CD4-positive, alpha-beta T cell (primary cell): ENCODE measurements at regions of chr11 and their contacts with region 1.

Region 1: DNA sequence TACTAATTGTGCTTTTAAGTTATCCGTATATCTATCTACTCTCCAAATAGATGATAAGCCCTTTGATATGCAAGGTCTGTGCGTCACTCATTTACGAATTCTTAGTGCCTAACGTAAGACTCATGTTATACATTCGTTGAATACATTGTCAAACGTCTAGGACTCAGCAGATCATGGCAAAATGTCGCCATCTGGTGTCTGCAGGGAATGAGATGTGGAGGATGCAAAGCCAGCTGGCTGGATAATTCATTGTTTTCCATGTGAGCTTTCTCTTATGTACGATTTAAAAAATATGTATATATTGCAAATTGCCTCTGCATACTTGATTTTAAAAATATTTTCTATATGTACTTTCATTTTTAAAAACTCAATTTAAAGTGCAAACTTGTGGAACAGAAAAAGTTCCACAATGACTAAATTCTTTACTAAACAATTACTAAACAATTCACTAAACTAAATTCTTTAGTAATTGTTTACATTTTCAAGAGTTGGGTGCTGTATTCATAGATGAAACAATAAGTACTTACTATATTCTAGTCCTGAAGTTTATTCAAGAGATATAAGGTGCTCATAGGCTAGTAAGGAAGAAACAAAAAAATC is 33.8 kb downstream of the ZNF202 start:
- DNase-seq: peak; percentile 21 to 77 (median 54)
- ATAC-seq: peak; percentile 78
- H3K4me3 ChIP-seq: no peak overlapping the region
- H3K4me3 Mint-ChIP-seq: no peak overlapping the region
- H3K27ac ChIP-seq: no peak overlapping the region
- H3K27ac Mint-ChIP-seq: no peak overlapping the region
- H3K4me1 ChIP-seq: no peaks in the 10 kb centered on the region
- H3K4me1 Mint-ChIP-seq: no peaks in the 10 kb centered on the region
- H3K27me3 ChIP-seq: no peaks in the 10 kb centered on the region
- H3K27me3 Mint-ChIP-seq: peaks cover 14% of the 10 kb centered on the region
- CTCF ChIP-seq: peak; percentile 76

Region 2: GRCh38 chr11:123580557-123581275 is 127.0 kb before region 1 on chr11:
- CTCF ChIA-PET with region 1: interaction called, 15 read pairs
- POLR2A ChIA-PET with region 1: no interaction called
- intact Hi-C with region 1: loop called (anchors 1 to 2 kb)
- DNase-seq: peak; percentile 40 to 83 (median 58)
- ATAC-seq: peak; percentile 97
- H3K4me3 ChIP-seq: no peak overlapping the region
- H3K4me3 Mint-ChIP-seq: no peak overlapping the region
- H3K27ac ChIP-seq: no peak overlapping the region
- H3K27ac Mint-ChIP-seq: no peak overlapping the region
- H3K4me1 ChIP-seq: peaks cover 20% of the 10 kb centered on the region
- H3K4me1 Mint-ChIP-seq: peaks cover 20% of the 10 kb centered on the region
- H3K27me3 ChIP-seq: no peaks in the 10 kb centered on the region
- H3K27me3 Mint-ChIP-seq: no peaks in the 10 kb centered on the region
- CTCF ChIP-seq: peak; percentile 96

Region 3: DNA sequence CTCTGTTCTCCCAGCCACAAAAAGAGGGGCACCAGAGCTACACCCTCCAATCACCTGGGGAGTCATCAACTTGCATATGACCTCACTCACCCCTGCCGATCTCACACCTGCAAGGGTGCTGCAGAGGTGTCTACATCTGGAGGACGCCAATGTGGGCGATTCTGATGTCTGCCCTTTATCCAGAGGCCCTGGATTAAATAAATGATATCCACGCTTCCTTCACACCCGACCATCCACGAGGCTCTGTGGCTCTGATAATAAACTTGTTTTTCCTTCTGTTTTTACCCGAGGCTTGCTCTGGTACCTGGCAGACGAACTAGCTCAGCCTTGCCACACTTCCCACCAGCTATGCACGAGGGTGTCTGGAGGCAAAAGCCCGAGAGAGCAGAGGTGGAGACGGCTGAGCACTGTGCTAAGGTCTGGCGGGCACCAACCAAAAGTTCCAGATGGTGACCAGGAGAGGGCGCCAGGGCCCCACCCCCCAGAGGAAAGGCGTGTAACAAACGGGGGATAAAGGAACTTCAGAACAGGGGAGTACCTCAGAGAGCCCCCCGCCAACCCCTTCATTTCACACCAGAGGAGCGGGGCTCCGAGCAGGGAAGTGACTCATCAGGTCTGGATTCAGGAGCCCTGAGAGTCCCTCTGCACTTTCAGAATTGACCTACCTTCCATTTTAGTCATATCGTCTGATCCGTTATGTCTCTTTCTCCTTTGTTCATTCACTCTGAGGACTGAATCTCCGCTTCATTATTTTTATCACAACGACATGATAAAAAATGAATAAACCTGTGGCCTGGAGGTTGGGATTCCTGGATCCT is 66.8 kb before region 1 on chr11:
- CTCF ChIA-PET with region 1: interaction called, 16 read pairs
- POLR2A ChIA-PET with region 1: no interaction called
- intact Hi-C with region 1: loop called (anchors 1 kb)
- DNase-seq: peak; percentile 19 to 73 (median 39)
- ATAC-seq: peak; percentile 80
- H3K4me3 ChIP-seq: no peak overlapping the region
- H3K4me3 Mint-ChIP-seq: no peak overlapping the region
- H3K27ac ChIP-seq: no peak overlapping the region
- H3K27ac Mint-ChIP-seq: no peak overlapping the region
- H3K4me1 ChIP-seq: peaks cover 6% of the 10 kb centered on the region
- H3K4me1 Mint-ChIP-seq: no peaks in the 10 kb centered on the region
- H3K27me3 ChIP-seq: peaks cover 0 to 6% of the 10 kb centered on the region in 2 experiments
- H3K27me3 Mint-ChIP-seq: peaks cover 38% of the 10 kb centered on the region
- CTCF ChIP-seq: peak; percentile 68

Region 4: DNA sequence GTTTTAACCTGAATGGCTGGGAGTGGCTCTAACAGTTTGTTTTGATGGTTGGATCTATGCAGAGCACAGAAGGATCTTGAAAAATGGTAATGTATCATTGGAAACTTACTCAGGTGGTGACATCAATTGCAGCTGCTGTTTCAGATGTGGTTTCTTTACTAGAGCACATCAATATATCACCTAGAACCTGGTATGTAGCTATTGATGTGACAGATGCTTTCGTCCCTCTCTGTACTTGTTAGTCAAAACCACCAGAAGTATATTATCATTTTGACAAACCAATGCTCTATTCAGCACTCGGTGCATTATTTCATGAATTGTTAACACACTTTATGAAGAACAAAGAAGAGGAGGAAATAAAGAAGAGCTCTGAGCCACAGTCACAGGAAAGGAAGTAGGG is 26.7 kb before region 1 on chr11:
- CTCF ChIA-PET with region 1: interaction called, 3 read pairs
- POLR2A ChIA-PET with region 1: no interaction called
- intact Hi-C with region 1: loop called in 1 of 2 experiments (anchors 1 kb)
- DNase-seq: peak in 6 of 14 experiments; percentile 3 to 79 (median 30)
- ATAC-seq: peak; percentile 92
- H3K4me3 ChIP-seq: no peak overlapping the region
- H3K4me3 Mint-ChIP-seq: peak overlapping the region; percentile 15
- H3K27ac ChIP-seq: no peak overlapping the region
- H3K27ac Mint-ChIP-seq: peak overlapping the region; percentile 80
- H3K4me1 ChIP-seq: peaks cover 5% of the 10 kb centered on the region
- H3K4me1 Mint-ChIP-seq: peaks cover 17% of the 10 kb centered on the region
- H3K27me3 ChIP-seq: no peaks in the 10 kb centered on the region
- H3K27me3 Mint-ChIP-seq: peaks cover under 1% of the 10 kb centered on the region
- CTCF ChIP-seq: no peak